GM12878 (cell line): ENCODE measurements at regions of chr5 and their contacts with region 1.

Region 1: GRCh38 chr5:60677844-60678664 is 21.9 kb downstream of the DEPDC1B start:
- DNase-seq: peak; percentile 20
- ATAC-seq: peak; percentile 88
- H3K4me3 ChIP-seq: no peak overlapping the region
- H3K27ac ChIP-seq: no peak overlapping the region
- H3K4me1 ChIP-seq: no peaks in the 10 kb centered on the region
- H3K27me3 ChIP-seq: no peaks in the 10 kb centered on the region
- CTCF ChIP-seq: peak; percentile 35 to 61 (median 59); a peak in 5 of 6 replicates
- EP300 ChIP-seq: no peak
- POLR2A ChIP-seq: no peak
- RAD21 ChIP-seq: peak; percentile 72

Region 2: GRCh38 chr5:60699530-60700382 is 21.7 kb after region 1 on chr5 and contains the start of gene DEPDC1B:
- CTCF ChIA-PET with region 1: interaction called, 99 read pairs
- POLR2A ChIA-PET with region 1: interaction called, 5 read pairs
- RAD21 ChIA-PET with region 1: interaction called, 8 read pairs
- SMC1A ChIA-PET with region 1: interaction called, 16 read pairs
- in situ Hi-C with region 1: no loop called
- intact Hi-C with region 1: no loop called
- DNase-seq: peak; percentile 50
- ATAC-seq: peak; percentile 95
- H3K4me3 ChIP-seq: peak within 1 kb of the TSS; percentile 94
- H3K27ac ChIP-seq: peak within 1 kb of the TSS; percentile 89
- H3K4me1 ChIP-seq: no peaks in the 10 kb centered on the region
- H3K27me3 ChIP-seq: no peaks in the 10 kb centered on the region
- CTCF ChIP-seq: peak; percentile 28 to 37 (median 33); a peak in 5 of 6 replicates
- EP300 ChIP-seq: no peak
- POLR2A ChIP-seq: peak; percentile 93
- RAD21 ChIP-seq: no peak
- polyA plus RNA-seq, gene DEPDC1B: 29.7 to 30.1 TPM

Region 3: DNA sequence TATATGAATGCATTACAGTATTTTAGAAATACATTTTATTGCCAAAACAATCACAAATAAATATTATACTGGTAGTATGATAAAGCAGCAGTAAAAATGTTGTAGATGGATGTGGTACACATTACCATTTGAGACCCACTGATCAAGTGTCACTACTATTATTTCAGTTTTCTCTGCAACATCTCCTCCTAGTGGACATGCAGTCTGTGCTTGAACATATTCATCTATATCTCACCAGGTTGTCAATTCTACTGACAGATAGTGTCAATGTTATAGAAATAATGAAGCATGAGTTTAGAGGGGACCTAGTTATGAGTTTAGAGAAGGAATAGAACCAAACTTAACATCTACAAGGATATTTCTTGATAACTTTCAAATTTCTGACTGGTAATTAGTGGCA is 205.2 kb after region 1 on chr5:
- CTCF ChIA-PET with region 1: interaction called, 7 read pairs
- POLR2A ChIA-PET with region 1: no interaction called
- RAD21 ChIA-PET with region 1: interaction called, 5 read pairs
- SMC1A ChIA-PET with region 1: no interaction called
- in situ Hi-C with region 1: no loop called
- intact Hi-C with region 1: loop called (anchors 1 kb)
- DNase-seq: no peak
- ATAC-seq: peak; percentile 68
- H3K4me3 ChIP-seq: no peak overlapping the region
- H3K27ac ChIP-seq: no peak overlapping the region
- H3K4me1 ChIP-seq: no peaks in the 10 kb centered on the region
- H3K27me3 ChIP-seq: no peaks in the 10 kb centered on the region
- CTCF ChIP-seq: peak; percentile 47 to 58 (median 50); a peak in 5 of 6 replicates
- EP300 ChIP-seq: no peak
- POLR2A ChIP-seq: no peak
- RAD21 ChIP-seq: peak; percentile 50

Region 4: DNA sequence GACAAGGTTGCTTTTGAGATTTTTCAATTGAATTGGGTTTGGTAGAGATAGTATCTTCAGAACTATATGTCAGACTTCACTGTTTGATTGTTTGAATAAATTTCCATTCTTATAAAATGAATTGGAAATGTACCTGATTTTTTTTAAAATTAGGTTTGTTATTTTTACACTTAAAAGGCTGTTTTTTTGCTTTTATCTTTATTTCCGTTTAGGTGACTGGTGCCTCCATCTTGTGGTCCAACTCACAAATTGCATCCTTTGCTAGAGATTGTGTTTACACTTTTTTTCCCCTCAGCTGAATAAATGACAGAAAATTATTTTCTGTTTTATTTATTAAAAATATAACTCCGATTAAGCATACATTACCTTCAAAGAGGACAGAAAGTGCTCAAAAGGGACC is 282.5 kb after region 1 on chr5:
- CTCF ChIA-PET with region 1: interaction called, 10 read pairs
- POLR2A ChIA-PET with region 1: interaction called, 5 read pairs
- RAD21 ChIA-PET with region 1: interaction called, 18 read pairs
- SMC1A ChIA-PET with region 1: interaction called, 10 read pairs
- in situ Hi-C with region 1: no loop called
- intact Hi-C with region 1: loop called (anchors 2 kb)
- DNase-seq: no peak
- ATAC-seq: peak; percentile 38; the same call in 1 of the 3 replicates
- H3K4me3 ChIP-seq: no peak overlapping the region
- H3K27ac ChIP-seq: no peak overlapping the region
- H3K4me1 ChIP-seq: no peaks in the 10 kb centered on the region; the same call in 1 of the 2 replicates
- H3K27me3 ChIP-seq: no peaks in the 10 kb centered on the region
- CTCF ChIP-seq: peak; percentile 42 to 55 (median 48)
- EP300 ChIP-seq: no peak
- POLR2A ChIP-seq: no peak
- RAD21 ChIP-seq: peak; percentile 56